Activated T-helper 1 cell treated with anti-CD3 and anti-CD28 coated beads, Interleukin-12 subunit alpha, Interleukin-12 subunit beta, Interleukin-2, Interleukin-4 antibody, amounts not matched to agents 30 ng/mL and 10 ng/mL and 1 ng/mL, durations not matched to agents 14 hours and 24 hours and 36 hours (primary cell): ENCODE measurements at regions of chr2 and their contacts with region 1.

Region 1: GRCh38 chr2:118148809-118149208 is 60.5 kb downstream of the INSIG2 start:
- DNase-seq: no peak
- H3K4me3 Mint-ChIP-seq: no peak overlapping the region
- H3K27ac Mint-ChIP-seq: no peak overlapping the region
- H3K4me1 Mint-ChIP-seq: no peaks in the 10 kb centered on the region
- H3K27me3 Mint-ChIP-seq: peaks cover 8% of the 10 kb centered on the region

Region 2: GRCh38 chr2:118112771-118113334 is 36.0 kb before region 1 on chr2:
- intact Hi-C with region 1: loop called (anchors 5 kb)
- DNase-seq: no peak
- H3K4me3 Mint-ChIP-seq: no peak overlapping the region
- H3K27ac Mint-ChIP-seq: peak overlapping the region; percentile 26
- H3K4me1 Mint-ChIP-seq: peaks cover 26% of the 10 kb centered on the region
- H3K27me3 Mint-ChIP-seq: no peaks in the 10 kb centered on the region

Region 3: DNA sequence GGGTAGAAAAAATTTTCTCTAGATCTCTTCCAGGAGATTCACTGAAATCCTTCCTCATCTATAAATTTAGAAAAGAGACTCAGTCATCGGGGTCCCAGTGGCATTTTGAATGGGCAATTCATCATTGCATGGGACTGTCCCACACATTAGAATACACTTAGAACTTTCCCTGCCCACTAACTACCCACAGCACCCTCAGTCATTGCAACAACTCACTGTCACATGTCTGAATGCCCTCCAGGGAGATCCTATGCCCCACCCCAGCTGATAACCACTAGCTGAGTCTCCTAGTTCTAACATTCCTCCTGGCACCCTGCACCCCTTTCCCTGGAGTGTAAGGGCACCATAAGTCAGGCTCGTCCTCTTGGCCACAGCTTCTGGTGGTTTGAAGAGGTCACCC is 29.1 kb after region 1 on chr2:
- intact Hi-C with region 1: loop called (anchors 2 kb)
- DNase-seq: no peak
- H3K4me3 Mint-ChIP-seq: no peak overlapping the region
- H3K27ac Mint-ChIP-seq: peak overlapping the region; percentile 98
- H3K4me1 Mint-ChIP-seq: peaks cover 48% of the 10 kb centered on the region
- H3K27me3 Mint-ChIP-seq: no peaks in the 10 kb centered on the region